ENCODE measurements at regions of chr9 and their contacts with region 1.

Region 1: DNA sequence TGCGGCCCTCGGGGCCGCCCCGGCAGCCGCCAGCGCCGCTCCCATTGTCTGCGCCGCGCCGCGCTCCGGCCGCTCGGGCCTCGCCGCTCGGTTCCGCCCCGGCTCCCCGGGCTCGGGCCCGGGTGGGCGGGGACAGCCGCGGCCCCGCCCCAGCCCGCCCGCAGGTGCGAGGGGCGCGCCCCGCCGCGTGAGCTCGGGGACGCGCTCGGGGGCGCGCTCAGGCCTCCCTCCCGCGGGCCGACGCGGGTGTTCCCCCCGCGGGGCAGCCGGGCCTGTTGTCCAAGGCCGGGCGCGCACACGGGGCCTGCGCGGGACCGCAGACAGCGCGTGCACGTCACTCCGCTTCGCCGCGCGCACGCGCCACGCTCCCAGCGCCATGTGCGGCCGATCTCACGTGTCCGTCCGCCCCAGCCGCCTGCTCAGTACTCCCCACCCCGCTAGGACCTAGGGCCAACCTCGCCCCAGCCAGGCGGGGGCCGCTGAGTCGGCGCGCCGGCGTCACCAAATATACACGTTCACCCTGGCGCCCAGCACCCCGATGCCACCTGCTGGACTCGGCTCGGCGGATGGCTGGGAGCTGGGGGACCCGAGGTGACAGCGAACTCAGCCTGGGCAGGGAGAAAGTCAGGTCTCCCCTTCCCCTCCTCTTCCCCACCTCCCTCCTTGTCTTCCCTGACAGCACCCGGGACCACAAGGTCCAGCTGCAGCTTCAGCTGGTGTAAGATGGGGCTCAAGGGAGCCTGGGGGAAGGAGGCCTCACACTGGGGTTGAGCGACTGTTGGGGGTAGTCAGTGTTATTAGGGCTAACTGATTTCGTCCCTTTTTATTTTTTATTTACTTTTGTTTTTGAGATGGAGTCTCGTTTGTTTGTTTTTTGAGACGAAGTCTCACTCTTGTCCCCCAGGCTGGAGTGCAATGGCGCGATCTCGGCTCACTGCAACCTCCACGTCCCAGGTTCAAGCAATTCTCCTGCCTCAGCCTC is 14.3 kb downstream of the GBGT1 start:
- DNase-seq: peak; percentile 92 to 96 (median 93)
- H3K4me3 ChIP-seq: peak overlapping the region; percentile 35 to 95 (median 85)
- H3K27ac ChIP-seq: peak overlapping the region in 1 of 2 experiments; percentile 87
- H3K4me1 ChIP-seq: peaks cover 3 to 44% (median 40%) of the 10 kb centered on the region in 4 experiments
- H3K27me3 ChIP-seq: no peaks in the 10 kb centered on the region

Region 2: GRCh38 chr9:133042676-133043075 is 106.7 kb before region 1 on chr9:
- CTCF ChIA-PET with region 1: interaction called, 10 read pairs
- POLR2A ChIA-PET with region 1: no interaction called
- DNase-seq: no peak
- H3K4me3 ChIP-seq: no peak overlapping the region
- H3K27ac ChIP-seq: no peak overlapping the region
- H3K4me1 ChIP-seq: no peaks in the 10 kb centered on the region
- H3K27me3 ChIP-seq: no peaks in the 10 kb centered on the region

Region 3: DNA sequence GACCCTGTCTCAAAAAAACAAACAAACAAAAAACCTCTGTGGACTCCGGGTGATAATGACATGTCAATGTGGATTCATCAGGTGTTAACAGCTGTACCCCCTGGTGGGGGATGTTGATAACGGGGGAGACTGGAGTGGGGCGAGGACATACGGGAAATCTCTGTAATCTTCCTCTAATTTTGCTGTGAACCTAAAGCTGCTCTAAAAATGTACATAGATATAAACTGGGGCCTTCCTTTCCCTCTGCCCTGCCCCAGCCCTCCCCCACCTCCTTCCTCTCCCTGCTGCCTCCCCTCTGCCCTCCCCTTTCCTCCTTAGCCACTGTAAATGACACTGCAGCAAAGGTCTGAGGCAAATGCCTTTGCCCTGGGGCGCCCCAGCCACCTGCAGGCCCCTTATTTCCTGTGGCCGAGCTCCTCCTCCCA is 89.0 kb before region 1 on chr9:
- CTCF ChIA-PET with region 1: interaction called, 10 read pairs
- POLR2A ChIA-PET with region 1: no interaction called
- DNase-seq: peak; percentile 31 to 78 (median 68)
- H3K4me3 ChIP-seq: peak overlapping the region in 4 of 7 experiments; percentile 11 to 57 (median 32)
- H3K27ac ChIP-seq: peak overlapping the region in 1 of 2 experiments; percentile 77
- H3K4me1 ChIP-seq: peaks cover 5 to 76% (median 70%) of the 10 kb centered on the region in 4 experiments
- H3K27me3 ChIP-seq: no peaks in the 10 kb centered on the region

Region 4: GRCh38 chr9:133094842-133095393 is 54.5 kb before region 1 on chr9:
- CTCF ChIA-PET with region 1: interaction called, 445 read pairs
- POLR2A ChIA-PET with region 1: interaction called, 3 read pairs
- DNase-seq: no peak
- H3K4me3 ChIP-seq: no peak overlapping the region
- H3K27ac ChIP-seq: no peak overlapping the region
- H3K4me1 ChIP-seq: peaks cover 0 to 3% (median 0%) of the 10 kb centered on the region in 4 experiments
- H3K27me3 ChIP-seq: no peaks in the 10 kb centered on the region

Region 5: DNA sequence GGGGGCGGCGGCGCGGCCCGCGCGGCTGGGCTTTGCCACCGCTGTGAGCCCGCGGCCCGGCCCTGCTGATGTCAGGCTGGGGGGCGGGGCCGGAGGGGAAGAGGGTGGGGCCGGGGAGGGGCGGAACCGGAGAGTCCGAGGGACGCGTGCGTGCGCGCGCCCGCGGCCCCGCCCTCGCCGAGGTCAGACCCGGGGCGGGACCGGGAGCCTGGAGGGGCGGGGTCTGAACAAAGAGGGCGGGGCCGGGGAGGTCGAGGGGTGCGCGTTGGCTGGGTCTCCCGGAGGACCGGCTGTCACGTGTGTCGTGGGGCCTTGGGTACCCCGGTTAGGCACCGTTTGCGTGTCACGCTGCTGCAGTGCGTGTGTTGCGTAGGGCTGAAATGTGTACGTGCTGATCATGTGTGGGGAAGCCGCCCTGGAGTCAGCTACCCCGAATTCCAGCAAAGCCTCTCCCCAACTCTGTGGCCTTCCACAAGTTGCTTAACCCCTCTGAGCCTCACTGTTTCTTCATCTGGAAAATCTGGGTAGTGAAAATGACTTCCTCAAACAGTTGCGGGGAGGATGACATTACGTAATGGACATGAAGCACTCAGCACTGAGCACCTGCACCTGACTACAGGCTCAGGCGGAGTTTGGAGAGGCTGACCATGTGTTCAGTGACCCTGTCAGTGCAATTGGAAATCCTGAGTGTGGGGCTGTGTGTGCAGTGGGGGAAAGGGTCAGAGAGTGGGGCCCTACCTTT is 28.0 kb before region 1 on chr9 and contains the start of gene RALGDS:
- CTCF ChIA-PET with region 1: interaction called, 445 read pairs
- POLR2A ChIA-PET with region 1: interaction called, 111 read pairs
- DNase-seq: peak; percentile 85 to 93 (median 92)
- H3K4me3 ChIP-seq: peak within 1 kb of the TSS; percentile 33 to 80 (median 68)
- H3K27ac ChIP-seq: peak within 1 kb of the TSS; percentile 68 to 74
- H3K4me1 ChIP-seq: peaks cover 0 to 94% (median 81%) of the 10 kb centered on the region in 4 experiments
- H3K27me3 ChIP-seq: no peaks in the 10 kb centered on the region

Region 6: GRCh38 chr9:133160742-133161546 is 11.5 kb after region 1 on chr9:
- CTCF ChIA-PET with region 1: interaction called, 17 read pairs
- POLR2A ChIA-PET with region 1: interaction called, 8 read pairs
- DNase-seq: peak; percentile 58 to 69 (median 67)
- H3K4me3 ChIP-seq: no peak overlapping the region
- H3K27ac ChIP-seq: no peak overlapping the region
- H3K4me1 ChIP-seq: peaks cover 0 to 36% (median 32%) of the 10 kb centered on the region in 4 experiments
- H3K27me3 ChIP-seq: no peaks in the 10 kb centered on the region

Measured in common myeloid progenitor, CD34-positive (primary cell).